Right cardiac atrium (tissue), 5 donors: ENCODE measurements at regions of chr2 and their contacts with region 1.

Region 1: GRCh38 chr2:45494269-45494977 is 116.6 kb downstream of the SRBD1 start:
- DNase-seq: no peak
- ATAC-seq: no peak
- H3K4me3 ChIP-seq: no peak overlapping the region
- H3K27ac ChIP-seq: no peak overlapping the region
- H3K4me1 ChIP-seq: no peaks in the 10 kb centered on the region
- H3K27me3 ChIP-seq: no peaks in the 10 kb centered on the region

Region 2: DNA sequence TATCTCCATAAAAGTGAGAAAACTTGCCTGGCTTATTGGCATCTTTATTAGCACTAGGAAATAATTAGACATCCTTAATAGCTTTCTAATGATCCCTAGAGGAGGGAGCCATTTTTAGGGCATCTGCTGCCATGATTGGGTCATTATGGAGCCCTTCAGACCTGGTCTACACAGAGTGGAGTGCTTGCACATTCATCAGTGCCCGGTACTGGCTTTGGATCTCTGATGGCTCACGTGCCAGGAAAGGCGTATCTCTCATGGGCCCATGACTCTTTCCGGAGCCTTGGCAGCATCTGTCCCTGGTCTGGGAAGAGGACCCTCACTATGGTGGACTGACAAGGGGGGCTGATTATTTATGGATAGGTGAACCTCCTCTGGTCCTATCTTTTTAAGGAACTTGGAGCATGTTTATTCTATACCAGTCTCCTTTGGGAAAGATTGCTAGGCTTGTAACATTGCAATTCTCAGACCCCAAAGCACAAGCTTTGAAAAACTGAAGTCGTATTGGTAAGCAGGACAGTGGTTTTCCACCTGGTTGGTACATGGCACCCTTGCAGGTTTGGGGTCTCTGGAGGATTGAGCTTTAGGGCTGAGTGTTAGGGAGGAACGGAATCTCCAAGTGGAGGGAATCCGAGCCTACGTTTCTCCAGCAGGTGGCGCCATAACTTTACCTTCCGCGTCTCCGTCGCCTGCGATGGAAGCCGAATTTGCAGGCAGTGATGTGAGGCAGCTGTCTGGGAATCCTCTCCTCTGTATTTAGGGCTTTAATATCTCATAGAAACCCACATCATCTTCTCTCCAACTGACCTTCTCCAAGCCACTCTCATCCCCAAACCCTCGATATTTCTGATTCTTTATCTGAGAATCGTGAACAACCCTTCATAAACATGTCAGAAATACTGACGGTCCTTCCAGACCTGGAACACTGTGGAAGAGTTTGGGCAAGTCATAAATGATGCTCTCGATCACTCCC is 513.0 kb before region 1 on chr2:
- intact Hi-C with region 1: loop called (anchors 2 to 5 kb)
- DNase-seq: peak; percentile 75 to 89 (median 84)
- ATAC-seq: peak; percentile 77 to 78
- H3K4me3 ChIP-seq: no peak overlapping the region
- H3K27ac ChIP-seq: no peak overlapping the region
- H3K4me1 ChIP-seq: no peaks in the 10 kb centered on the region
- H3K27me3 ChIP-seq: no peaks in the 10 kb centered on the region

Region 3: GRCh38 chr2:44987036-44987435 is 507.4 kb before region 1 on chr2:
- intact Hi-C with region 1: loop called in 2 of 4 experiments (anchors 2 to 5 kb)
- DNase-seq: no peak
- ATAC-seq: no peak
- H3K4me3 ChIP-seq: no peak overlapping the region
- H3K27ac ChIP-seq: no peak overlapping the region
- H3K4me1 ChIP-seq: no peaks in the 10 kb centered on the region
- H3K27me3 ChIP-seq: no peaks in the 10 kb centered on the region